ENCODE measurements at regions of chr16 and their contacts with region 1.

Region 1: DNA sequence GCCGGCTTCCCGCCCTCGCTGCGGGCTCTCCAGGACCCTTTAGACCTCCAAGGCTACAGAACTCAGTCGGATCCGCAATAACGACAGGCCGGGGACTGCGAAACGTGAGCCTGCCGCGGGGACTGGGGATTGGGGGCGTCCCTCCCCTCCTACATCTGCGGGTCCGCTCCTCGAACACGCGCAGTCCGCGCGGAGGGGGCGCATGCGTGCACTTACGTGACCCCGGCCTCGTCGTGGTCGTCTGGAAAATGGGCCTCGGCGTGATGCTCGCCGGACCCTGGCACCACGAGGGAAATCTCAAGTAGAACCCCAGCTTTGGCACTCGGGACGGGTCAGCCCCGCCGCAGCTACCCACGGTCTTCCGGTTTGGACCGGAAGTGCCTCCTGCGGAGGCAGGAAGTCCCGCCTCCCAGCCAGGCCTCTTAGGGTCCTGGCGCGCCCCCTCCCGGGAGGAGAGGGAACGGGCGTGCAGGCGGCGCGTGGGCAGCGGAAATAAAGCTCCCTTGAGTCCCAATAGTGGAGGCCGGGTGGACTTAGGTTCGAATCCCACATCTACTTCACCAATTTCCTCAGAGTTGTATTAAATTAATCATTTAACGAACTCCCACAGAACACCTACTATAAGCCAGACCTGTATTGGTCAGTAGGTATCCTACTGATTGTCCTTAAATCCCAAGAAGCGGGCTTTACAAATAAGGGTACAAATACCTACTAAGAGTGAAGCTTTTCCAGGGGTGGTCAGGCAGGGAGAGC is at the start of gene TAF1C:
- DNase-seq: peak; percentile 91 to 93 (median 92)
- ATAC-seq: peak; percentile 96 to 99 (median 99)
- H3K4me3 ChIP-seq: peak within 1 kb of the TSS; percentile 90 to 99 (median 93)
- H3K27ac ChIP-seq: peak within 1 kb of the TSS; percentile 33 to 74 (median 39)
- H3K4me1 ChIP-seq: peaks cover 0 to 8% (median 2%) of the 10 kb centered on the region in 4 donors
- H3K27me3 ChIP-seq: no peaks in the 10 kb centered on the region
- CTCF ChIP-seq: peak; percentile 91 to 95 (median 94)
- POLR2A ChIP-seq: peak; percentile 16
- total RNA-seq, gene TAF1C: 11.0 to 28.3 (median 19.3) TPM

Region 2: GRCh38 chr16:84044118-84044488 is 142.8 kb before region 1 on chr16:
- intact Hi-C with region 1: no loop called
- DNase-seq: peak in 1 of 3 donors; percentile 33
- ATAC-seq: peak; percentile 20 to 66 (median 50)
- H3K4me3 ChIP-seq: no peak overlapping the region
- H3K27ac ChIP-seq: no peak overlapping the region
- H3K4me1 ChIP-seq: no peaks in the 10 kb centered on the region
- H3K27me3 ChIP-seq: no peaks in the 10 kb centered on the region
- CTCF ChIP-seq: peak; percentile 20 to 42 (median 34)
- POLR2A ChIP-seq: no peak

Region 3: GRCh38 chr16:84084570-84085270 is 102.1 kb before region 1 on chr16:
- intact Hi-C with region 1: loop called (anchors 10 kb)
- DNase-seq: peak; percentile 59 to 72 (median 70)
- ATAC-seq: peak; percentile 87 to 92 (median 90)
- H3K4me3 ChIP-seq: no peak overlapping the region
- H3K27ac ChIP-seq: no peak overlapping the region
- H3K4me1 ChIP-seq: peaks cover 0 to 3% (median 0%) of the 10 kb centered on the region in 4 donors
- H3K27me3 ChIP-seq: no peaks in the 10 kb centered on the region
- CTCF ChIP-seq: peak; percentile 63 to 83 (median 80)
- POLR2A ChIP-seq: no peak

Measured in right lobe of liver (tissue), 6 donors.